ENCODE measurements at regions of chr12 and their contacts with region 1.

Region 1: DNA sequence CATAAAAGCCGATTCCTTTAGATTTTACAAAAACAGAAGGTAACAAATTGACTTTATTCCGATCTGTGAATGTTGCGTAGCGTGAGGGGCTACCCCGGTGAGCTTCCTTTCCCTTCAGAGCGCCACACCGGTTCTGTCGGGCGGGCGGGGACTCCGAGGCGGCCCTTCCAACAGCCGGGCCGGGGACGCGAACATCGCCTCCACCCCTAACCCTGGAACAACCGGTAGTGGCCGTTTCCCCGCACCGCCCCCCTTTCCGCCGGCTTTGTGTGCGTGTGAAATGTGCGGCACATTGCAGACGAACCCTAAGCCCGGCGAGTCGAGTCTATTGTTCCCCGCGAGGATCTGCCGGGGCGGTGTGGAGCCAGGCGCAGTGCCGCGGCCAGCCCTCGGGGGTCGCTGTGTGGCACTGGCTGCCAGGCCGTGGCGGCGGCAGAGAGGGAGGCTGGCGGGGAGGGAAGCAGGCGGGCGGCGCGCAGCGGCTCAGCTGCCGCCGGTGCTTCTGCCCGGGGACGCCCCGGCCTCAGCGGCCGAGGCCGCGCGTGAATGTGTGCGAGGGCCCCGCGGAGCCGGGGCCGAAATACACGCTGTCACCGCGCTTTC is 775 bp upstream of the ARID2 start:
- DNase-seq: peak; percentile 93 to 99 (median 97)
- H3K4me3 ChIP-seq: peak overlapping the region; percentile 94
- H3K4me3 Mint-ChIP-seq: peak overlapping the region; percentile 92 to 99 (median 98)
- H3K27ac ChIP-seq: peak overlapping the region; percentile 96
- H3K27ac Mint-ChIP-seq: peak overlapping the region; percentile 84 to 100 (median 98)
- H3K4me1 ChIP-seq: peaks cover 41% of the 10 kb centered on the region
- H3K4me1 Mint-ChIP-seq: peaks cover 32 to 56% (median 43%) of the 10 kb centered on the region in 3 donors
- H3K27me3 ChIP-seq: no peaks in the 10 kb centered on the region
- H3K27me3 Mint-ChIP-seq: no peaks in the 10 kb centered on the region

Region 2: DNA sequence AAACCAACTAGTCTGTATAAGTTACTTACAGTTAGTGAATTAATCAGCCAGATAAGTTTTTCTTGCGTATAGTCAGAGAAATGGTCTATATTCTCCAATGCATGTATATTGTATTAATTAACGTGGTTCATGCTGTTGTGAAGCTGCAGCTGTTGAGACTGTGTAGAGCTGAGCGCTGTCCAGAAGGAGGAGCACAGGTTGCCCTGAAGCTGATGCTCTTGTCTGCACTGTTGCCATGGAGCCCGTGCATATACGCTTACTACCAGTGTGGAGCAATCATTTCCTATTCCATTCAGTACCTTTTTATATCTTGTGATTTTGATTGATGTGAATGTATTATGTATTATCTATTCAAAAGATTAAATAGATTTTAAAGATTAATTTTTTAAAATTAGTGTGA is 73.5 kb before region 1 on chr12:
- CTCF ChIA-PET with region 1: interaction called, 34 read pairs
- POLR2A ChIA-PET with region 1: interaction called, 7 read pairs
- DNase-seq: peak; percentile 27 to 81 (median 60)
- H3K4me3 ChIP-seq: no peak overlapping the region
- H3K4me3 Mint-ChIP-seq: no peak overlapping the region
- H3K27ac ChIP-seq: no peak overlapping the region
- H3K27ac Mint-ChIP-seq: no peak overlapping the region
- H3K4me1 ChIP-seq: no peaks in the 10 kb centered on the region
- H3K4me1 Mint-ChIP-seq: peaks cover 0 to 11% (median 0%) of the 10 kb centered on the region in 3 donors
- H3K27me3 ChIP-seq: no peaks in the 10 kb centered on the region
- H3K27me3 Mint-ChIP-seq: peaks cover 2 to 20% of the 10 kb centered on the region in 2 donors

Region 3: GRCh38 chr12:45670346-45671065 is 58.2 kb before region 1 on chr12:
- CTCF ChIA-PET with region 1: interaction called, 21 read pairs
- POLR2A ChIA-PET with region 1: interaction called, 29 read pairs
- DNase-seq: peak in 2 of 5 donors; percentile 42 to 44
- H3K4me3 ChIP-seq: no peak overlapping the region
- H3K4me3 Mint-ChIP-seq: peak overlapping the region; percentile 2 to 64 (median 45)
- H3K27ac ChIP-seq: no peak overlapping the region
- H3K27ac Mint-ChIP-seq: peak overlapping the region in 3 of 8 donors; percentile 9 to 38 (median 16)
- H3K4me1 ChIP-seq: peaks cover 30% of the 10 kb centered on the region
- H3K4me1 Mint-ChIP-seq: peaks cover 27 to 35% (median 28%) of the 10 kb centered on the region in 3 donors
- H3K27me3 ChIP-seq: no peaks in the 10 kb centered on the region
- H3K27me3 Mint-ChIP-seq: peaks cover 0 to 2% of the 10 kb centered on the region in 2 donors

Region 4: GRCh38 chr12:45745861-45746277 is 17.1 kb after region 1 on chr12:
- CTCF ChIA-PET with region 1: interaction called, 45 read pairs
- POLR2A ChIA-PET with region 1: interaction called, 7 read pairs
- DNase-seq: peak in 2 of 5 donors; percentile 19 to 44
- H3K4me3 ChIP-seq: no peak overlapping the region
- H3K4me3 Mint-ChIP-seq: no peak overlapping the region
- H3K27ac ChIP-seq: no peak overlapping the region
- H3K27ac Mint-ChIP-seq: peak overlapping the region in 4 of 8 donors; percentile 26 to 66 (median 54)
- H3K4me1 ChIP-seq: peaks cover 22% of the 10 kb centered on the region
- H3K4me1 Mint-ChIP-seq: peaks cover 53 to 84% (median 76%) of the 10 kb centered on the region in 3 donors
- H3K27me3 ChIP-seq: no peaks in the 10 kb centered on the region
- H3K27me3 Mint-ChIP-seq: no peaks in the 10 kb centered on the region

Region 5: GRCh38 chr12:45990468-45991283 is 261.9 kb after region 1 on chr12 and contains the start of gene SCAF11:
- CTCF ChIA-PET with region 1: interaction called, 5 read pairs
- POLR2A ChIA-PET with region 1: interaction called, 15 read pairs
- DNase-seq: peak; percentile 100
- H3K4me3 ChIP-seq: peak within 1 kb of the TSS; percentile 80
- H3K4me3 Mint-ChIP-seq: peak within 1 kb of the TSS; percentile 91 to 99 (median 94)
- H3K27ac ChIP-seq: peak within 1 kb of the TSS; percentile 98
- H3K27ac Mint-ChIP-seq: peak within 1 kb of the TSS; percentile 93 to 100 (median 99)
- H3K4me1 ChIP-seq: peaks cover 42% of the 10 kb centered on the region
- H3K4me1 Mint-ChIP-seq: peaks cover 51 to 56% (median 51%) of the 10 kb centered on the region in 3 donors
- H3K27me3 ChIP-seq: no peaks in the 10 kb centered on the region
- H3K27me3 Mint-ChIP-seq: peaks cover 0 to 10% of the 10 kb centered on the region in 2 donors
- total RNA-seq, gene SCAF11: 114 to 119 TPM

Measured in CD8-positive, alpha-beta memory T cell (primary cell).